Endothelial cell of umbilical vein (primary cell): ENCODE measurements at regions of chr12 and their contacts with region 1.

Region 1: DNA sequence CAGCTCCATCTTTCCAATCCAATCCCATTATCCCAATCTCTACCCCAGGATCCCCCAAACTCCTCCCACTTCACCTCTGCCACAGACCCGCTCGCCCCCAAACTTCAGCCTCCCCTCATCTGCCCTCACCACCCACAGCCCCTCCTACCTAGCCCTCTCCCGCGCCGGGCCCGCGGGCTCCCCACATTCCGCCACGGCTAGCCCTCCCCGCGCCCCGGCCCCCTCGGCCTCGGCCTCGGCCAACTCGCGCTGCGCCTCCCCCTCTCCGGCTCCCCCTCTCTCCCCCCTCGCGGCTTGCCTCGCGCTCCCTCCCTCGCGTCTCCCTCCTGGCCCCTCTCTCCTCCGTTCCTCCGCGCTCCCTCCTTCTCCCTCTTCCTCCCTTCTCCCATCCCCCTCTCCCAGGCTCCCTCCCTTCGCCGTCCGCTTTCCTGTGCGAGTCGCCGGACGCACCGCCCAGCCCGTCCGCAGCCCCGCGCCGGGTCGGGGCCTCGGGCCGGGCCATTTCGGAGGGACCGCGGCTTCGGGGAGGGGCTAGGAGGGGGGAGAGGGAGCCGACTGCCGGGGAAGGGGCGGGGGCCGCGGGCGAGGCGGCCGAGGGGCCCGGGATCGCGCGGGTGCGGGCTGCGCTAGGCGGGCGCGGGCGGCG is at the start of gene ATN1:
- DNase-seq: peak; percentile 83
- H3K4me3 ChIP-seq: peak within 1 kb of the TSS; percentile 88 to 92 (median 90)
- H3K27ac ChIP-seq: peak within 1 kb of the TSS; percentile 72
- H3K4me1 ChIP-seq: peaks cover 48% of the 10 kb centered on the region
- H3K27me3 ChIP-seq: no peaks in the 10 kb centered on the region
- CTCF ChIP-seq: no peak
- POLR2A ChIP-seq: peak; percentile 55
- total RNA-seq, gene ATN1: 117 and 122 TPM in 2 replicates

Region 2: GRCh38 chr12:6266444-6267138 is 660.9 kb before region 1 on chr12:
- CTCF ChIA-PET with region 1: no interaction called
- POLR2A ChIA-PET with region 1: no interaction called
- dilution Hi-C with region 1: no loop called
- intact Hi-C with region 1: no loop called
- DNase-seq: no peak
- H3K4me3 ChIP-seq: no peak overlapping the region
- H3K27ac ChIP-seq: no peak overlapping the region
- H3K4me1 ChIP-seq: peaks cover 9% of the 10 kb centered on the region
- H3K27me3 ChIP-seq: no peaks in the 10 kb centered on the region
- CTCF ChIP-seq: no peak
- POLR2A ChIP-seq: no peak

Region 3: GRCh38 chr12:6873094-6874014 is 54.1 kb before region 1 on chr12 and contains the start of gene SPSB2:
- CTCF ChIA-PET with region 1: interaction called, 25 read pairs
- POLR2A ChIA-PET with region 1: interaction called, 3 read pairs
- dilution Hi-C with region 1: no loop called
- intact Hi-C with region 1: loop called (anchors 1 kb)
- DNase-seq: peak; percentile 96
- H3K4me3 ChIP-seq: peak within 1 kb of the TSS; percentile 59 to 92 (median 84)
- H3K27ac ChIP-seq: peak within 1 kb of the TSS; percentile 60
- H3K4me1 ChIP-seq: peaks cover 34% of the 10 kb centered on the region
- H3K27me3 ChIP-seq: no peaks in the 10 kb centered on the region
- CTCF ChIP-seq: no peak
- POLR2A ChIP-seq: peak; percentile 91
- total RNA-seq, gene SPSB2: 3.9 and 6.9 TPM in 2 replicates

Region 4: GRCh38 chr12:6914246-6914946 is 13.1 kb before region 1 on chr12 and contains the start of gene ENO2:
- CTCF ChIA-PET with region 1: interaction called, 4 read pairs
- POLR2A ChIA-PET with region 1: interaction called, 4 read pairs
- dilution Hi-C with region 1: no loop called
- intact Hi-C with region 1: loop called (anchors 1 kb)
- DNase-seq: peak; percentile 51
- H3K4me3 ChIP-seq: peak within 1 kb of the TSS; percentile 51 to 57 (median 52)
- H3K27ac ChIP-seq: no peak within 1 kb of the TSS
- H3K4me1 ChIP-seq: peaks cover 11% of the 10 kb centered on the region
- H3K27me3 ChIP-seq: no peaks in the 10 kb centered on the region
- CTCF ChIP-seq: no peak
- POLR2A ChIP-seq: no peak
- total RNA-seq, gene ENO2: 13.8 and 18.6 TPM in 2 replicates

Region 5: DNA sequence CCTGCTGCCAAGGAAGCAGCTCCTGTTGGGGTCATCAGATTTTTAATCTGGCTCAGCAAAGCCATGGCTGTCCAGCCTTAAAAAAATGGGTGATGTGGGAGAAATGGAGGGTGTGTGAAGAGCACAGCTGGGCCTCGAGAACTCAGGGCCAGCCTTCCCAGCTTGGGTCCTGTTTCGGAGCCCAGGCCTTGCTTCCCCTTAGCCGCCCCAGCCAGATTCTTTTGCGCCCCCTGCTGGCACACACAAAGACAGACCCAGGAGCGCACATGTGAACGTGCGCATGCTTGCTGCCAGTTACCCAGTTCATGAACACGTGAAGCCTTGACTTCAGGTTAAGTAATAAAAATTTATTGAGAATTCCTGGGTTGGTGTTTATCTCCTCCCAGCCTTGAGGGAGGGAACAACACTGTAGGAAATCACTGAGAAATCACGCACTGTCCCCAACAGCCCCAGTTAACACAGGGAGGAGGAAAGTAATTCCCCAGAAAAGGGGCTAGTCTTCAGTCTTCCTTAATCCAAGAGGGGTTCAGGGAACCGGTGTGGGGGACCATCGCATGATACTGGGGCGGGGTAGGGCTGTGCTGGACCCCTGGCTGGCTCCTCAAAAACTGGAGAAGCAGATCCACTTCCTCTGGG is 37.6 kb after region 1 on chr12:
- CTCF ChIA-PET with region 1: interaction called, 33 read pairs
- POLR2A ChIA-PET with region 1: no interaction called
- dilution Hi-C with region 1: no loop called
- intact Hi-C with region 1: loop called (anchors 1 kb)
- DNase-seq: peak; percentile 80
- H3K4me3 ChIP-seq: no peak overlapping the region
- H3K27ac ChIP-seq: no peak overlapping the region
- H3K4me1 ChIP-seq: peaks cover 23% of the 10 kb centered on the region
- H3K27me3 ChIP-seq: no peaks in the 10 kb centered on the region
- CTCF ChIP-seq: peak; percentile 89 to 92
- POLR2A ChIP-seq: no peak

Region 6: DNA sequence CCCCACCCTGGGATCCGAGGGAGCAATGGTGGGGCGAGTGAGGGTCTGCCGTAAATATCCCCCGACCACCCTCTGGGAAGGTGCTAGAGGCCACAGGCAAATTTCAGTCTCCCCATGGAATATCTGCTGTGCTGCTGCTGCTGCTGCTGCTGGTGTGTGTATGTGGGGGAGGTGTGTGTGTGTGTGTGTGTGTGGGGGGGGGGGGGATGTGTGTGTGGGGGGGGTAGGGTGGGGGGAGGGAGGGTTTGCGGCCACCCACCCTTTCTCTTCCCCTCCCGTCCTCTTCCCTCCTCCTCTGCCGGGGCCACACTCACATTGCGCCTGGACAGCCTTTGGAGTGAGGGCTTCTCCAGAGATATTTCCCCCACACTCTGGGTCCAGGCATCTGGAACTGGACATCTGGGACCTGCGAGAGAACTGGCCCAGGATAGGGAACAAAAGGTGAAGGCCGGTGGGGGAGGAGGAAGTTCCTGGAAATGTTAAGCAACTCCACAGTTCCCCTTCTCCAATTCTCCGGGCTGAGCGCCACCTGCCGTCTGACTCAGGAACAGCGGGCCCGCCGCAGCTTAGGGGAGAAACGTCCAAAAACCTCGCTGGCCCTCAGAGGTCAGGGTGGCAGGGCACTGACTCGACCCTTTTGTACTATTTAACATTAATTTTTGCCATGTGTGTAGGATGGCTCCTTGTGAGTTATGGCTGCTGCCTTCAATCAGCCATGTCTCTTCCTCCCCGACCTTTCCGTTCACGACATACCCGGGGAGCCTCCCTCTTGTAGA is 181.5 kb after region 1 on chr12 and contains the start of gene C1RL:
- CTCF ChIA-PET with region 1: interaction called, 9 read pairs
- POLR2A ChIA-PET with region 1: no interaction called
- dilution Hi-C with region 1: no loop called
- intact Hi-C with region 1: loop called (anchors 1 kb)
- DNase-seq: peak; percentile 74
- H3K4me3 ChIP-seq: peak within 1 kb of the TSS; percentile 23 to 64 (median 39)
- H3K27ac ChIP-seq: peak within 1 kb of the TSS; percentile 61
- H3K4me1 ChIP-seq: peaks cover 8% of the 10 kb centered on the region
- H3K27me3 ChIP-seq: no peaks in the 10 kb centered on the region
- CTCF ChIP-seq: peak; percentile 97 to 98
- POLR2A ChIP-seq: no peak
- total RNA-seq, gene C1RL: 22.5 and 25.0 TPM in 2 replicates